HepG2 (cell line): ENCODE measurements at regions of chr19 and their contacts with region 1.

Region 1: GRCh38 chr19:17996826-17997316 is 11.1 kb upstream of the ARRDC2 start:
- DNase-seq: peak; percentile 59
- ATAC-seq: peak; percentile 86
- H3K4me3 ChIP-seq: peak overlapping the region in 1 of 3 experiments; percentile 67; a peak in 1 of 6 replicates
- H3K27ac ChIP-seq: no peak overlapping the region
- H3K4me1 ChIP-seq: peaks cover 25% of the 10 kb centered on the region
- H3K27me3 ChIP-seq: peaks cover 0 to 5% of the 10 kb centered on the region in 2 experiments; a peak in 1 of 5 replicates
- CTCF ChIP-seq: peak; percentile 99
- EP300 ChIP-seq: no peak
- POLR2A ChIP-seq: no peak
- RAD21 ChIP-seq: peak; percentile 96

Region 2: GRCh38 chr19:17865364-17866311 is 131.2 kb before region 1 on chr19:
- CTCF ChIA-PET with region 1: interaction called, 10 read pairs
- POLR2A ChIA-PET with region 1: interaction called, 5 read pairs
- in situ Hi-C with region 1: loop called (anchors 5 kb)
- intact Hi-C with region 1: loop called (anchors 5 kb)
- DNase-seq: no peak
- ATAC-seq: peak; percentile 23
- H3K4me3 ChIP-seq: no peak overlapping the region
- H3K27ac ChIP-seq: peak overlapping the region; percentile 14
- H3K4me1 ChIP-seq: peaks cover 56% of the 10 kb centered on the region
- H3K27me3 ChIP-seq: peaks cover 2 to 7% of the 10 kb centered on the region in 2 experiments; a peak in 2 of 5 replicates
- CTCF ChIP-seq: no peak
- EP300 ChIP-seq: no peak
- POLR2A ChIP-seq: peak in 1 of 2 experiments; percentile 74
- RAD21 ChIP-seq: peak; percentile 18; the same call in 1 of the 2 replicates

Region 3: DNA sequence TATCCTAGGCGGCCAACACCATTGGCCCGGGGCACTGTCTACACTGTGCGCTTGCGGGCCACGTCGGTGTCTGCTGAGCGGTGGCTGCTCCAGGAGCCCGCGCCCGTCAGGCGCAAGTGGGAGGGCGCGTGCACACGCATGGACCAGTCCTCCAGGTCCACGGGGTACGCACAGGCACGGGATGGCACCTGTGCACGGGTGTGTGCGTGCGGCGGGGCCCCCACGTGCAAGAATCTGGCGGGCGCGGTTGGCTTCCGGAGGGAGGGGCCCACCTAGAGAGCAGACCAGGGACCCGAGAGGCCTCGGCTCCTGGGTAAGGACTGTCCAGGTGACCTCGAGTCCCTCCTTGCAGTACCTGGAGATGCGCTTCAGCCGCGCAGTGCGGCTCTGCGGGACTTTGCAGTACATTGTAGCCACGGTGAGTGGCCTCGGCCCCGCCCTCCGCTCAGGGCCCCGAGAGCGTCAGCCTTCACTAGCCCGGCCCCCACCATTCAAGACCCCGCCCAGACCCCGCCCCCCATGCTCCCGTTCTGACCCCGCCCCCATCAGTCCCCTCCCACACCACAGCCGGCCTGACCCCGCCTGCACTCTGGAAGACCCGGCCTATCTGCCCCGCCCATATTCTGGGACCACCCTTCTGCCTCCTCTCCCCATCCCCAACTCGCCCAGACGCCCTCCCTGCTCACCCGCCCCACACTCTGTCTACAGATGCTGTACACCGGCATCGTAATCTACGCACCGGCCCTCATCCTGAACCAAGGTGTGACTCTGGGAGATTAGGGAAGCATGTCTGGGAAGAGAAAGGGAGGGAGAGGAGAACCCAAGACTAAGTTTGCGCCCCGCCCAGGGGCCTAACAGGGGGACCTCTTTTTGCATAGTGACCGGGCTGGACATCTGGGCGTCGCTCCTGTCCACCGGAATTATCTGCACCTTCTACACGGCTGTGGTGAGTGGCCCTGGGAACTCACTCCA is 122.8 kb before region 1 on chr19:
- CTCF ChIA-PET with region 1: interaction called, 10 read pairs
- POLR2A ChIA-PET with region 1: interaction called, 5 read pairs
- in situ Hi-C with region 1: loop called (anchors 5 kb)
- intact Hi-C with region 1: loop called (anchors 5 kb)
- DNase-seq: no peak
- ATAC-seq: peak; percentile 50
- H3K4me3 ChIP-seq: peak overlapping the region; percentile 15 to 64 (median 22); a peak in 2 of 6 replicates
- H3K27ac ChIP-seq: no peak overlapping the region
- H3K4me1 ChIP-seq: peaks cover 6% of the 10 kb centered on the region
- H3K27me3 ChIP-seq: peaks cover 5 to 33% of the 10 kb centered on the region in 2 experiments
- CTCF ChIP-seq: no peak
- EP300 ChIP-seq: no peak
- POLR2A ChIP-seq: no peak
- RAD21 ChIP-seq: no peak

Region 4: GRCh38 chr19:17938092-17938845 is 58.6 kb before region 1 on chr19:
- CTCF ChIA-PET with region 1: interaction called, 91 read pairs
- POLR2A ChIA-PET with region 1: interaction called, 4 read pairs
- in situ Hi-C with region 1: no loop called
- intact Hi-C with region 1: loop called (anchors 1 kb)
- DNase-seq: peak; percentile 46
- ATAC-seq: peak; percentile 88
- H3K4me3 ChIP-seq: no peak overlapping the region
- H3K27ac ChIP-seq: no peak overlapping the region
- H3K4me1 ChIP-seq: peaks cover 22% of the 10 kb centered on the region
- H3K27me3 ChIP-seq: no peaks in the 10 kb centered on the region; a peak in 1 of 5 replicates
- CTCF ChIP-seq: peak; percentile 96
- EP300 ChIP-seq: no peak
- POLR2A ChIP-seq: no peak
- RAD21 ChIP-seq: peak; percentile 94

Region 5: GRCh38 chr19:17947815-17948513 is 48.9 kb before region 1 on chr19:
- CTCF ChIA-PET with region 1: interaction called, 23 read pairs
- POLR2A ChIA-PET with region 1: no interaction called
- in situ Hi-C with region 1: loop called (anchors 5 kb)
- intact Hi-C with region 1: loop called (anchors 1 kb)
- DNase-seq: peak; percentile 85
- ATAC-seq: peak; percentile 40
- H3K4me3 ChIP-seq: peak overlapping the region; percentile 53 to 81 (median 55); a peak in 4 of 6 replicates
- H3K27ac ChIP-seq: no peak overlapping the region
- H3K4me1 ChIP-seq: peaks cover 51% of the 10 kb centered on the region
- H3K27me3 ChIP-seq: peaks cover 23 to 45% of the 10 kb centered on the region in 2 experiments
- CTCF ChIP-seq: no peak; the same call in 1 of the 2 replicates
- EP300 ChIP-seq: no peak
- POLR2A ChIP-seq: no peak
- RAD21 ChIP-seq: no peak

Region 6: GRCh38 chr19:17985037-17985818 is 11.6 kb before region 1 on chr19:
- CTCF ChIA-PET with region 1: no interaction called
- POLR2A ChIA-PET with region 1: no interaction called
- in situ Hi-C with region 1: no loop called
- intact Hi-C with region 1: no loop called
- DNase-seq: no peak
- ATAC-seq: no peak; the same call in 1 of the 3 replicates
- H3K4me3 ChIP-seq: no peak overlapping the region
- H3K27ac ChIP-seq: no peak overlapping the region
- H3K4me1 ChIP-seq: no peaks in the 10 kb centered on the region
- H3K27me3 ChIP-seq: peaks cover 2 to 32% of the 10 kb centered on the region in 2 experiments; a peak in 3 of 5 replicates
- CTCF ChIP-seq: no peak
- EP300 ChIP-seq: no peak
- POLR2A ChIP-seq: no peak; a peak in 1 of 4 replicates
- RAD21 ChIP-seq: no peak